CD4-positive, alpha-beta memory T cell (primary cell): ENCODE measurements at regions of chr1 and their contacts with region 1.

Region 1: DNA sequence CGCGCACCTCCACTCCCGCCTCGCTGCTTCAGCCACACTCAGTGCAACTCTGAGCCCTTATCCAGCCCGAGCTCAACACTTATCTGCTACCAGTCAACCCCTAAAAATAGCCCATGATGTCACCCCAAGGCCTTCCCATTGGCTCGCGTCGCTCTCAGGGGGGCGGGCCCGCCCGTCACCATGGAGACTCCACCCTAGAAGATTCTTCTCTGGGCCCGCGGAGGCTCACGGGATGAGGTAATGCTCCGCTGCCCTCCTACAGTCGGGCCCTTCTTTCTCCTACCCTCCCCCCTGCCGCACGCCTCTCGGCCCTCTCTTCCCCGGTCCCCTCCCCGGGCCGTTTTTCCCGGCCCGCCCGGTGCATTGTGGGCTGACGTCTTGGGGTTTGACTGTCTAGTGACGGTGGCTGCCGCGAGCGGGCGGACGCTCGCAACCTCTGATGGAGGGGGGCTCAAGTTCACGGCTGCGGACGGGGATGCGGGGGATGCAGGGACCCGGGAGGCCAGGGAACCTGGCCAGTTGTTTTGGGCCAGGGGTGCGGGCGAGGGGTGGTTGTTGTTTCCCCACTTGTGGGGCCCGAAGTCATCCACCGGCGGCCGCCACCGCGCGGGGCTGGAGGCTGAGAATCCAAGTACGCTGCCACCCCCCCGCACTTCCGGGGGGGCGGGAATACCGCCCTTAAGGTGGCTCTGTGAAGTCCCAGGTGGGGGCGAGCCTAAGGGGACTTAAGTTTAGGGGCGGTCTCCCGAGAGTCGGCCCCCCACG is at the start of gene JUN:
- DNase-seq: peak; percentile 98 to 100 (median 99)
- H3K4me3 ChIP-seq: peak within 1 kb of the TSS; percentile 76 to 96
- H3K4me3 Mint-ChIP-seq: peak within 1 kb of the TSS; percentile 87 to 98 (median 92)
- H3K27ac ChIP-seq: peak within 1 kb of the TSS; percentile 99
- H3K27ac Mint-ChIP-seq: peak within 1 kb of the TSS; percentile 97 to 100 (median 99)
- H3K4me1 ChIP-seq: peaks cover 31% of the 10 kb centered on the region
- H3K4me1 Mint-ChIP-seq: peaks cover 19 to 49% (median 29%) of the 10 kb centered on the region in 4 donors
- H3K27me3 ChIP-seq: no peaks in the 10 kb centered on the region
- H3K27me3 Mint-ChIP-seq: peaks cover 3 to 5% of the 10 kb centered on the region in 2 donors
- total RNA-seq, gene JUN: 19.0 TPM

Region 2: DNA sequence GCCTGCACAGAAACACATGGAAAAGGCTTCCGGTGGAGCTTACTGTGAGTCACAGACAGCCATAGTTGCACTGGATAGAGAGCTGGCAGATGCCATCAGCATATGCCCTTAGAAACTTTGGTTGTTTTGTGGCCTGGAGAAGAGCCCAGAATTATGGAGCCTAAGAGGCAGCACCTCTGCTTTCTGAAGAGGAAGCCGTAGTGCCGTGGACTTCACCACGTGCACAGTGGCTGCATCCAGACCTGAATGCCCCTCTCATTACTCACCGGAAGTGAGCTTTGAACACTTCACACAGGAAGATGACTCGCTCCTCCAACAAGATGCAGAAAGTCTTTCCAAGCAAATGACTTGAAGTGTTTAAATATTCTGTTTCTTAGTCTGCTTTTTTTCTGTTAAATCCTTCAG is 28.7 kb before region 1 on chr1:
- CTCF ChIA-PET with region 1: interaction called, 3 read pairs
- POLR2A ChIA-PET with region 1: interaction called, 60 read pairs
- intact Hi-C with region 1: no loop called
- DNase-seq: peak; percentile 22 to 79 (median 28)
- H3K4me3 ChIP-seq: peak overlapping the region in 1 of 2 donors; percentile 9
- H3K4me3 Mint-ChIP-seq: peak overlapping the region; percentile 27 to 84 (median 72)
- H3K27ac ChIP-seq: peak overlapping the region; percentile 13
- H3K27ac Mint-ChIP-seq: peak overlapping the region; percentile 13 to 89 (median 69)
- H3K4me1 ChIP-seq: peaks cover 35% of the 10 kb centered on the region
- H3K4me1 Mint-ChIP-seq: peaks cover 35 to 57% (median 45%) of the 10 kb centered on the region in 4 donors
- H3K27me3 ChIP-seq: no peaks in the 10 kb centered on the region
- H3K27me3 Mint-ChIP-seq: no peaks in the 10 kb centered on the region

Region 3: GRCh38 chr1:58841455-58841854 is 57.3 kb after region 1 on chr1:
- CTCF ChIA-PET with region 1: interaction called, 5 read pairs
- POLR2A ChIA-PET with region 1: interaction called, 18 read pairs
- intact Hi-C with region 1: loop called (anchors 1 kb)
- DNase-seq: peak in 3 of 5 donors; percentile 17 to 21 (median 17)
- H3K4me3 ChIP-seq: no peak overlapping the region
- H3K4me3 Mint-ChIP-seq: no peak overlapping the region
- H3K27ac ChIP-seq: no peak overlapping the region
- H3K27ac Mint-ChIP-seq: peak overlapping the region in 4 of 7 donors; percentile 17 to 71 (median 42)
- H3K4me1 ChIP-seq: no peaks in the 10 kb centered on the region
- H3K4me1 Mint-ChIP-seq: peaks cover 0 to 2% (median 0%) of the 10 kb centered on the region in 4 donors
- H3K27me3 ChIP-seq: no peaks in the 10 kb centered on the region
- H3K27me3 Mint-ChIP-seq: no peaks in the 10 kb centered on the region

Region 4: DNA sequence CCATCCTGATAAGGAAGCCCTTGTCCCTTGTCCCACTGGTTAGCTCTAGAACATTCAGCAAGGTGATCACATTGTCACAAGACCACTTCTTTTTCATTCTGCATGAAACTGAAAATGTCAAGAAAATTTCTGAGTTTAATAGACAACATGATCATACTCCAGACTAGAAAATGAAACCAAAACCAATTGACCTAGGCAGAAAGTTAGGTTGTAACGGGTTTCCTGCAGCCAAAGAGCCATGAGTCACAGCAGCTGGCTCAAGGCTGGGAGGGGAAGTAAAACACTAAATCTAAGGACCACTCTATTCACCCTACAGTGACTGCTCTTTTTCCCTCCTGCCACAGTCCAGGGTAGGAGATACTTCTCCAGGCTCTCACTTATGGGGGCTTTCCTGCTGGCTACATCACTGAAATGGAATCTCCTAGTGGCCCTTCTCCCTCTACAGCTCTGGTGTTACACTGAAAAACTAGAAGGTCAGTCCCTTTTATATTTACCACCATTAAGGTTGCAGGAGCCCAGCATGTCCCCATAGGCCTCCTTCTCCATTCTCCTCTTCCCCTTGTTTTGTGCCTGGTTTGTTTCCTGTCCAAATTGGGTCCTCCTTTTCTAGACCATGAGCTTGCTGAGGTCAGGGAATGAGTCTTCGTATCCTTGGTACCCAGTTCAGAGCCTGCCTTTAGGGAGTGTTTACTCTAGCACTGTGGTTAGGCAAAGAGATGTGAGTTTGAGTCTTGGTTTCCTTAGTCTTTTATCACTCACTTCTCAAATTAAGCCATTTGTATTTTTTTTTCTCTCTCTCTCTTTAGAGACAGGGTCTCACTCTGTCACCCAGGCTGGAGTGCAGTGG is 236.2 kb after region 1 on chr1:
- CTCF ChIA-PET with region 1: no interaction called
- POLR2A ChIA-PET with region 1: interaction called, 24 read pairs
- intact Hi-C with region 1: loop called (anchors 2 kb)
- DNase-seq: peak; percentile 48 to 72 (median 52)
- H3K4me3 ChIP-seq: peak overlapping the region; percentile 39 to 63
- H3K4me3 Mint-ChIP-seq: peak overlapping the region; percentile 83 to 91 (median 86)
- H3K27ac ChIP-seq: peak overlapping the region; percentile 57
- H3K27ac Mint-ChIP-seq: peak overlapping the region; percentile 76 to 96 (median 95)
- H3K4me1 ChIP-seq: peaks cover 16% of the 10 kb centered on the region
- H3K4me1 Mint-ChIP-seq: peaks cover 13 to 31% (median 23%) of the 10 kb centered on the region in 4 donors
- H3K27me3 ChIP-seq: no peaks in the 10 kb centered on the region
- H3K27me3 Mint-ChIP-seq: no peaks in the 10 kb centered on the region

Region 5: DNA sequence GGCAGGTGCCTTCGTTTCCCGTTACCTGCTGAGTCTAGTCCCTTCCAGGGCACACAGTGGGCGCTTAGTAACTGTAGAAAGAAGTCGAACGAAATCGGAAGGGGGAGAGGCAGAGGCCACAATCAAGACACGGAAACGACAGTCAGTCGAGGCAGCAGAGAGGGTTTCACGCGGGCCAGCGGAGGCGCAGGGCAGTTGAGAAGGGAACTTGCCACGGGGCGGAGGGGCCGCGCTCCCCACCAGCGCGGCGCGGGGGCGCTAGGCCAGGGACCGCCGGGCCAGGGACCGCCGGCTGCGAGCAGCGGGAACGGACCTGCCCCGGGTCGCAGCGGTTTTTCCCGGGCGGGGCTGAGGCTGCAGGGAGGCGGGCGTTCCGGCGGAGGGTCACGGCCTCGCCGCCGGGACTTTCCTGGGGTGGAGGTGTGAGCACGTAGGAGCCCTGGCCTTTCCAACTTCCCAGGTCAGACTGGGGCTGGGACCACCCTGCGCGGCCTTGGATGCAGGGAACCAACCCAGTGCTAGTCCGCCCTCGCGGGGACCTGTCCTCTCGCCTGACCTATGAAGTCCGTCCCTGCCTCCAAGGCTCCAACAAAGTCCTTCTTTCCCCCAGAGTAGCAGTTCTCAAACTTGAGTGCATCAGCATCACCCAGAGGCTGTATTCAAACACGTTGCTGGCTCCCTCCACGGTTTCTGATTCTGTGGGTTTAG is 362.6 kb after region 1 on chr1:
- CTCF ChIA-PET with region 1: interaction called, 3 read pairs
- POLR2A ChIA-PET with region 1: interaction called, 4 read pairs
- intact Hi-C with region 1: loop called (anchors 2 kb)
- DNase-seq: peak in 4 of 5 donors; percentile 16 to 39 (median 24)
- H3K4me3 ChIP-seq: peak overlapping the region in 1 of 2 donors; percentile 38
- H3K4me3 Mint-ChIP-seq: peak overlapping the region; percentile 86 to 97 (median 92)
- H3K27ac ChIP-seq: peak overlapping the region; percentile 26
- H3K27ac Mint-ChIP-seq: peak overlapping the region in 5 of 7 donors; percentile 47 to 93 (median 91)
- H3K4me1 ChIP-seq: peaks cover 14% of the 10 kb centered on the region
- H3K4me1 Mint-ChIP-seq: peaks cover 11 to 27% (median 16%) of the 10 kb centered on the region in 4 donors
- H3K27me3 ChIP-seq: no peaks in the 10 kb centered on the region
- H3K27me3 Mint-ChIP-seq: no peaks in the 10 kb centered on the region